CD8-positive, alpha-beta T cell (primary cell): ENCODE measurements at regions of chr14 and their contacts with region 1.

Region 1: DNA sequence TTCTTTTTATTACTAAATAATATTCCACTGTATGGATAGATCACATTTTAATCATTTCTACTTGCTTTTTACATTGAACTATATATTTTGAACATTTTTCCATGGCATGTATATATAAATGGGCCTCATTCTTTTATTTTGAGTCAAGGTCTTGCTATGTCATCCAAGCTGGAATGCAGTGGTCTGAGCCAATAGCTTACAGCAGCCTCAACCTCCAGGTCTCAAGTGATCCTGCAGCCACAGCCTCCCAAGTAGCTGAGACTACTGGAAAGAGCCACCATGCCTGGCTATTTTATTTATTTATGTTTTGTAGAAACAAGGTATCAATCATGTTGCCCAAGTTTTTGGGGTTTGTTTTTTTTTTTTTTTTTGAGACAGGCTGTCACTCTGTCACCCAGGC is 7.6 kb downstream of the FCF1 start:
- DNase-seq: no peak
- ATAC-seq: no peak
- H3K4me3 ChIP-seq: no peak overlapping the region
- H3K4me3 Mint-ChIP-seq: no peak overlapping the region
- H3K27ac ChIP-seq: no peak overlapping the region
- H3K27ac Mint-ChIP-seq: no peak overlapping the region
- H3K4me1 ChIP-seq: no peaks in the 10 kb centered on the region
- H3K4me1 Mint-ChIP-seq: peaks cover 10% of the 10 kb centered on the region
- H3K27me3 ChIP-seq: no peaks in the 10 kb centered on the region
- H3K27me3 Mint-ChIP-seq: no peaks in the 10 kb centered on the region
- CTCF ChIP-seq: no peak

Region 2: GRCh38 chr14:73886449-73887317 is 833.8 kb before region 1 on chr14 and contains the start of gene ZNF410:
- CTCF ChIA-PET with region 1: no interaction called
- POLR2A ChIA-PET with region 1: no interaction called
- intact Hi-C with region 1: loop called in 1 of 2 experiments (anchors 5 kb)
- DNase-seq: peak; percentile 70 to 95 (median 85)
- ATAC-seq: peak; percentile 98
- H3K4me3 ChIP-seq: peak within 1 kb of the TSS; percentile 90
- H3K4me3 Mint-ChIP-seq: peak within 1 kb of the TSS; percentile 98
- H3K27ac ChIP-seq: peak within 1 kb of the TSS; percentile 91 to 99
- H3K27ac Mint-ChIP-seq: peak within 1 kb of the TSS; percentile 99
- H3K4me1 ChIP-seq: peaks cover 19% of the 10 kb centered on the region
- H3K4me1 Mint-ChIP-seq: peaks cover 46% of the 10 kb centered on the region
- H3K27me3 ChIP-seq: no peaks in the 10 kb centered on the region
- H3K27me3 Mint-ChIP-seq: no peaks in the 10 kb centered on the region
- CTCF ChIP-seq: no peak
- total RNA-seq, gene ZNF410: 86.6 to 89.2 TPM